Right ventricle myocardium inferior (tissue), 1 donor: ENCODE measurements at regions of chr18 and their contacts with region 1.

Region 1: DNA sequence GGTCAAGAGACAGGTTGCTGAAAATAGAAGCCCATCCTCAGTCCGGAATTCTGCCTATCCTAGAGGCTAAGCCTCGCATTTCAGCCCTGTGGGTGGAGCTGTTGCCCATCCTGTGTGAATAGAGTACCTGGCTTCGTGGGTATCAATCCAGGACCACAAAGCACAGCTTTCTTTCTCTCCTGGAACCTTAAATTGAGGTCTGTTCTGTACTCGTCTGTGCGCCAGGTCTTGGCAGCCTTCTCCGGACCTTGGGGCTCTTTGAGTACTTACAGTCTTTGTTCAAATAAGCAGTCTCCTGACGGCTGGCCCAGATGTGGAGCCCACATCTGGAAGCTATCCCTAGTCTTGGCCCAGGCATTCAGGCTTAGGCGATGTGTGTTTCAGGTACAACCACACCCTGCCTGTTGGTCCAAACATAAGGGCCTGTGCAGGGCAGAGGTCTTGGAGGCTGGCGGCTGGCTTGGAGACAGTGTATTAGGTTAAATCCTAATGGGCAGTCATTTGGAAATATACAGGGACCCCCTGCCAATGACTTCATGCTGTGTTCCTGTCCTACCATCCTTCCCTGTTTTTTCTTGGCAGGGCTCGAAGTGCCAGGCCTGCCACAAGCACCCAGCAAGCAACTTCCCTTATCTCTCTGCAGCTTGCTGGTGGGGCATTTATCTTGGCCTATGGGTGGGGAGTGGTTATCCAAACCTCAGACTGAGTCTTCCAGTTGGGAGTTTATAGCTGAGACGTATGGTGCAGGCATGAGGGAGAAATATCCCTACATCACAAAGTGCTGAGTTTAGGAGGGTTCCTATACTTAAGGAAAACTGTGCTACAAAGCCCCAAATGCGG is 294.1 kb downstream of the BCL2 start:
- DNase-seq: peak; percentile 39
- ATAC-seq: peak; percentile 69

Region 2: DNA sequence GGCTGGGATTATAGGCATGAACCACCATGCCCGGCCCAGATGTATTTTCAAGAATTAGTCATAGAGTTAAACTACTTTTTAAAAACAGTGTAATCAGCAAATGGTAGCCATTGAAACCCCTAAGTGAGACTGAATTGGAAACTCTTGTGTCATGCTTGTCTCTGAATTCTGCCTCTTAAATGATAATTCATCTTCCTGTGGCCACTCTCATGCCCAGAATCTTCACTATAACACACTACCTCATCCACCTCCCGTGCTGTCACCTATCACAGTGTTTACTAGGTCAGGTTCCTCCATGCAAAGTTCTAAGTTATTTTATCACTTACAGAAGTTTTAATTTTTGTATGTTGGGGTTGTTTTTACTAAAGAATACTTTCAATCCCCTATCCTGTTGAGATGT is 112.6 kb before region 1 on chr18:
- intact Hi-C with region 1: no loop called
- DNase-seq: no peak
- ATAC-seq: no peak

Region 3: DNA sequence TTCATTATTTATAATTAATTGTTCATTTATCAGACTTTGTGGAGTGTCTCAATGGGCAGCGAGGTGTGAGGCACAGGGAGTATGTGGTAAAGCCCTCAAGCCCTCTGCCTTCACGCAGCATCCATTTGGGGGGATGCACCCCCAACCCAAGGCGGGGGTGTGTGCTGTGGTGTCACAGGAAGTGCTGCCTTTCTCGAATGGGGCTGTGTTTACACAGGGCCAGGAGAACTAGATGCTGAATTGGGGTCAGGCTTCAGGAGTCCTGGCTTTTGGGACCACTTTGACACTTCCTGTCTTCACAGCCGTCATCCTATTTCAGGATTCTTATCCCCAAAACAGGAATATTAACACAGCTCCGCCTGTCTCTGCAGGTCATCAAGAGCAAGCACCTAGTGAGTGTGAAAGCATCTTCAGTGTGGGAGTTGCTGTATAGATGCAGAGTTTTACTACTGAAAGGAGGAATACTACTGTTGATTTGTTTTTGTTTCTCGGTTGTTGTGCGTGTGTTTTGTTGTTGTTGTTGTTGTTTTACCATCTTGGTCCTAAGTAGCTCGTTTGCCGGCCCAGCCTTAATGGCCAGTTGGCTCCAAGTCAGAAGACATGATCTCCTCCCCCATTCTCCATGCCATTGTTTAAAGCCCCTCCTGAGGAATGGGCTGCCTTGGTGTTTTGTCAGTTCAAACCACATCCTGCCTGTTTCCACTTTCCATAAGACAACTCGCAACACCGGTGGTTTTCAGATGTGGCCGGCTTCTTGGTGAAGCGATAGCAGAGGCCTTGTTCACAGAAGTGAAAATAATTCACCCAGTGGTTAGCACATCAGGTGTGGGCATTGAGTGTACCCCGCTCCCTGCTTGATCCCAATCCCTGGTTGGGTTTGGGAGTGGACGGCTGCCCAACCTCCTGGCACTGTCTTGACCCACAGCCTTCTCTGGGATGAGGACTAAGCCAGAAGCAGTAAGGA is 72.8 kb after region 1 on chr18:
- intact Hi-C with region 1: no loop called
- DNase-seq: no peak
- ATAC-seq: no peak

Region 4: DNA sequence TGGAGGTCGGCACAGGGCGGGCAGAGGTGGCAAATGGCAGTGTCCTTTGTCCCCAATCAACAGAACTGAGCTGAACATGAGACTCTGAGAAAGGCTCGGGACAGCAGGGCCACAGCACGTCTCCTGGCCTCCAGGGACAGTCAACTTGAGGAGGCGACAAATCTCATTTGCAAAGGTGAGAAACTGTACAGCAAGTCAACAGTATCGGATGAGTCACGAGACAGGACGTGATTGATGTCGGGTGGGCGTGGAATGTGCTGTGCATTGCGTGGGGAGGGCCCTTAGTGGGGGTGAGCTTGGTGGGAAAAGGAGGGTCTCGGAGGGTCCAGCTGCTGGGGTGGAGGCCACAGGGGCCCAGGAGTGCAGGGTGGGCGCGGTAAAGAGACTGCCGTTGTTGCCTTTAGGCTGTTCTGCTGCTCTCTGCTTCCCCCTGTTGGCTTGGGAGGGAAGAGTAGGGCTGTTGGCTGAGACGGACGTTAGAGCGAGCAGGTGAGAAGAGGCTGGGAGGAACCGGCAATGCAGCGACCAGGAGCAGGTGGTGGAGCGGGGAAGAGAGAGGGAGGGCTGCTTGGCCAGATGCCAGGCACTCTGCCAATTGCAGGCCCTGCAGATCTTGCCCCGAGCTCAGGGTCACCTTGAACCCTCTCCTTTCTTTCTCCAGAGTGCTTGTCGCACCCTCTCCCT is 129.8 kb after region 1 on chr18:
- intact Hi-C with region 1: no loop called
- DNase-seq: peak; percentile 63
- ATAC-seq: peak; percentile 68

Region 5: DNA sequence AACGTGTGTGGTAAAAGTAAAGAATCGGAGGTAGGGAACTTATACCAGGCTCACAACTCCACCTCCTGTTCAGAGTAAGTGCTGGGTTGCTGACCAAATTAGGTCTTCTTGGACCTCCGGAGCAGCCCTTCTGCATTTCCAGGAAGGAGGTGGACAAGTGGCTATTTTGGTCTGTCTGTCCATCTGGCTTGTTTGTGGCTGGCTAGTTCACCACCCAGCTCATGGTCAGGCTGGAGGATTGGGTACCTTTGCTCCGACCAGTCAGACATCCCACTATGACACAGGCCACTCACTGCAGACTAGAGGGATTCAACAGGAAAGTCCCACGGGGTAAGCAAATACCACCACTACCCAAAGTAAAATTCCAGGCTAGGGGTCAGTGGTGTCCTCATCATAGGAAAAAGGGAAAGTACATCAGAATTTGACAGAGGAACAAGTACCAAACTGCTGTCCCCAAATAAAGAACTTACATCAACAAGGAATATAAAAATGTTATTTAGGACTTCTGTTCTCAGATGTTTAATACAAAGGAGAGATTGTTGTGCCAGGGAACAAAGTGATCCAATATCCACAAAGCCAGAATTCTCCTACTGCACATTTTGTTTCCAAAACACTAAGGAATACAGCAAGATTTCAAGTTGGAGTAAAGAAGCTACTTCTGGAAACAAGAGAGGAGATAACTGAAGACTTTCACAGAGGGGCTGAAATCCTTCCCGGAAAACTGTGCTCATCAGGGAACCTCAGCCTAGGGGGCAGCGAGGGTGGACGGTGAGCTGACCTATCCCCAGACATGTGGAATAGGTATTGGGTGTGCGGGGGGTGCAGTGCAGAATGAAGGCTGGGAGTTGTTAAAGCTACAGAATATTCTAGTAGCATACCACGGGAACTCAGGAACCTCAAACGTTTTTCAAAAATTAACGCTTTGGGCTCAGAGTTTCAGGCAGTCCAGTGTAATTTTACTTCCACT is 237.2 kb after region 1 on chr18:
- intact Hi-C with region 1: loop called (anchors 5 kb)
- DNase-seq: no peak
- ATAC-seq: peak; percentile 79

Region 6: DNA sequence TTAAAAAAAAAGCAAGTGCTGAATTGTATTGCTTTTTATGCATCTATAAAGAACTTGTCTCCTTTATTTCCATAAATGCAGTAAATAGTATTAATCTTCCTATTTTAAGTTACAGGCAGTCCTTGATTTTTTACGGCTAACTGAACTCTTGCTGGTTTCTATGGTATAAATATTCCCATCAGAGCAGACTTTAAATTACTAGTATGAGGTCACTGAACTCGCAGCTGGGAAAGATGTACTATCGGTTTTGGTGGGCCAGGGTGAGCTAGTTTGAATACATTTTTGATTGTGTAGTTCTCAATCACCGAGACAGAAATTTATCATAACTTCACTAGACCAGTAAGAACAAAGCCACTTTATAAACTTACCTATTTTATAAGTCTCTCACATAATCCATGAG is 362.4 kb after region 1 on chr18:
- intact Hi-C with region 1: no loop called
- DNase-seq: no peak
- ATAC-seq: no peak